ENCODE measurements at regions of chr3 and their contacts with region 1.

Region 1: GRCh38 chr3:136752422-136753325 is 496 bp upstream of the STAG1 start:
- DNase-seq: peak; percentile 99
- ATAC-seq: peak; percentile 76 to 94 (median 84)
- H3K4me3 ChIP-seq: peak overlapping the region; percentile 93
- H3K4me3 Mint-ChIP-seq: peak overlapping the region; percentile 95
- H3K27ac ChIP-seq: peak overlapping the region; percentile 99
- H3K27ac Mint-ChIP-seq: peak overlapping the region; percentile 92 to 93
- H3K4me1 ChIP-seq: peaks cover 21% of the 10 kb centered on the region
- H3K4me1 Mint-ChIP-seq: peaks cover 46 to 47% of the 10 kb centered on the region in 2 donors
- H3K27me3 ChIP-seq: no peaks in the 10 kb centered on the region
- H3K27me3 Mint-ChIP-seq: no peaks in the 10 kb centered on the region
- CTCF ChIP-seq: no peak

Region 2: GRCh38 chr3:136196401-136197158 is 556.1 kb before region 1 on chr3:
- intact Hi-C with region 1: loop called (anchors 1 kb)
- DNase-seq: peak; percentile 94 to 99
- ATAC-seq: peak; percentile 62 to 76 (median 68)
- H3K4me3 ChIP-seq: peak overlapping the region; percentile 56
- H3K4me3 Mint-ChIP-seq: peak overlapping the region; percentile 99
- H3K27ac ChIP-seq: peak overlapping the region; percentile 99
- H3K27ac Mint-ChIP-seq: peak overlapping the region; percentile 98
- H3K4me1 ChIP-seq: peaks cover 8% of the 10 kb centered on the region
- H3K4me1 Mint-ChIP-seq: peaks cover 59 to 60% of the 10 kb centered on the region in 2 donors
- H3K27me3 ChIP-seq: no peaks in the 10 kb centered on the region
- H3K27me3 Mint-ChIP-seq: peaks cover 0 to 5% of the 10 kb centered on the region in 2 donors
- CTCF ChIP-seq: no peak

Region 3: GRCh38 chr3:136390574-136390973 is 362.1 kb before region 1 on chr3:
- intact Hi-C with region 1: loop called (anchors 2 kb)
- DNase-seq: no peak
- ATAC-seq: no peak
- H3K4me3 ChIP-seq: no peak overlapping the region
- H3K4me3 Mint-ChIP-seq: no peak overlapping the region
- H3K27ac ChIP-seq: no peak overlapping the region
- H3K27ac Mint-ChIP-seq: no peak overlapping the region
- H3K4me1 ChIP-seq: no peaks in the 10 kb centered on the region
- H3K4me1 Mint-ChIP-seq: no peaks in the 10 kb centered on the region
- H3K27me3 ChIP-seq: no peaks in the 10 kb centered on the region
- H3K27me3 Mint-ChIP-seq: no peaks in the 10 kb centered on the region
- CTCF ChIP-seq: no peak

Region 4: GRCh38 chr3:136577792-136578191 is 174.9 kb before region 1 on chr3:
- intact Hi-C with region 1: no loop called
- DNase-seq: no peak
- ATAC-seq: peak in 1 of 3 donors; percentile 41
- H3K4me3 ChIP-seq: no peak overlapping the region
- H3K4me3 Mint-ChIP-seq: no peak overlapping the region
- H3K27ac ChIP-seq: no peak overlapping the region
- H3K27ac Mint-ChIP-seq: peak overlapping the region; percentile 21 to 62
- H3K4me1 ChIP-seq: no peaks in the 10 kb centered on the region
- H3K4me1 Mint-ChIP-seq: peaks cover 17 to 19% of the 10 kb centered on the region in 2 donors
- H3K27me3 ChIP-seq: no peaks in the 10 kb centered on the region
- H3K27me3 Mint-ChIP-seq: no peaks in the 10 kb centered on the region
- CTCF ChIP-seq: no peak

Region 5: DNA sequence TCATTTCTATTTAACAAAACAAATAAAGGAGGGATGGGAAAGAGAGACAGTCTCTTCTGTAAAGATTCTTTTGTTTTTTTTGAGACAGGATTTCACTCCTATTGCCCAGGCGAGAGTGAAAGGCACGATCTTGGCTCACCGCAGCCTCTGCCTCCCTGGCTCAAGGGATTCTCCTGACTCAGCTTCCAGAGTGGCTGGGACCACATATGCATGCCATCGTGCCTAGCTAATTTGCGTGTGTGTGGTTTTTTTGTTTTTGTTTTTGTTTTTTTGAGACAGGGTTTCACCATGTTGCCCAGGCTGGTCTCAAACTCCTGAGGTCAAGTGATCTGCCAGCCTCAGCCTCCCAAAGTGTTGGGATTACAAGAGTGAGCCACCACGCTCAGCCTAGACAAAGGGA is 23.8 kb before region 1 on chr3:
- intact Hi-C with region 1: loop called (anchors 2 kb)
- DNase-seq: peak in 1 of 2 donors; percentile 25
- ATAC-seq: peak in 2 of 3 donors; percentile 20 to 36
- H3K4me3 ChIP-seq: no peak overlapping the region
- H3K4me3 Mint-ChIP-seq: peak overlapping the region; percentile 61
- H3K27ac ChIP-seq: peak overlapping the region; percentile 30
- H3K27ac Mint-ChIP-seq: peak overlapping the region; percentile 41 to 67
- H3K4me1 ChIP-seq: peaks cover 22% of the 10 kb centered on the region
- H3K4me1 Mint-ChIP-seq: peaks cover 63 to 64% of the 10 kb centered on the region in 2 donors
- H3K27me3 ChIP-seq: no peaks in the 10 kb centered on the region
- H3K27me3 Mint-ChIP-seq: no peaks in the 10 kb centered on the region
- CTCF ChIP-seq: no peak

Region 6: GRCh38 chr3:136909187-136909586 is 156.5 kb after region 1 on chr3:
- intact Hi-C with region 1: loop called (anchors 5 kb)
- DNase-seq: peak in 1 of 2 donors; percentile 32
- ATAC-seq: peak; percentile 73 to 86 (median 83)
- H3K4me3 ChIP-seq: no peak overlapping the region
- H3K4me3 Mint-ChIP-seq: peak overlapping the region; percentile 64
- H3K27ac ChIP-seq: peak overlapping the region; percentile 82
- H3K27ac Mint-ChIP-seq: peak overlapping the region; percentile 88 to 98
- H3K4me1 ChIP-seq: peaks cover 43% of the 10 kb centered on the region
- H3K4me1 Mint-ChIP-seq: peaks cover 80 to 89% of the 10 kb centered on the region in 2 donors
- H3K27me3 ChIP-seq: no peaks in the 10 kb centered on the region
- H3K27me3 Mint-ChIP-seq: no peaks in the 10 kb centered on the region
- CTCF ChIP-seq: no peak